ENCODE measurements at regions of chr21 and their contacts with region 1.

Region 1: GRCh38 chr21:38652396-38652795 is 153.3 kb upstream of the ETS2 start:
- DNase-seq: no peak
- H3K4me3 ChIP-seq: no peak overlapping the region
- H3K27ac ChIP-seq: peak overlapping the region; percentile 68 to 71
- H3K4me1 ChIP-seq: peaks cover 4 to 36% of the 10 kb centered on the region in 2 donors
- H3K27me3 ChIP-seq: no peaks in the 10 kb centered on the region
- CTCF ChIP-seq: no peak

Region 2: GRCh38 chr21:38637161-38637560 is 15.2 kb before region 1 on chr21:
- intact Hi-C with region 1: loop called (anchors 2 kb)
- DNase-seq: no peak
- H3K4me3 ChIP-seq: no peak overlapping the region
- H3K27ac ChIP-seq: peak overlapping the region; percentile 4 to 46
- H3K4me1 ChIP-seq: peaks cover 4 to 6% of the 10 kb centered on the region in 2 donors
- H3K27me3 ChIP-seq: no peaks in the 10 kb centered on the region
- CTCF ChIP-seq: no peak